Activated T-helper 1 cell treated with anti-CD3 and anti-CD28 coated beads, Interleukin-12 subunit alpha, Interleukin-12 subunit beta, Interleukin-2, Interleukin-4 antibody, amounts not matched to agents 30 ng/mL and 10 ng/mL and 1 ng/mL, durations not matched to agents 14 hours and 24 hours and 36 hours (primary cell): ENCODE measurements at regions of chr6 and their contacts with region 1.

Region 1: DNA sequence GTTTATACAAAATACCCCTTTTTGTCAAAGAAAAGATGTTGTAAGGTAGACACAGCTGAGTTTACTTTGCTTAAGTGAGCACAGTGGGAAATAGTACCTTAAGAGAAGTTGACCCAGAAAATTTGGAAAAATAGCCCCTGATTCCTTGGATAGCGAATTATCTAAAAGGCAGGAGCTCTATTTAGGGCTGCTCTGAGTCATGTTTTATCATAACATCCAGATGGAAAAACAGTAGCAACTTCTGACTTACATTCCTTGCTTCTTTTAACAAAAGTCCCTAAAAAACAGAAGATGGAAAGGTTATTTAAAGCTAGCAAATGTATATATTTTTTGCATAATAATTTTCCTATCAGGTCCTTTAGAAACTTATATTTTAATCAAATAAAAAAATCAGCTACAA is 59.0 kb downstream of the THEMIS start:
- DNase-seq: no peak
- H3K4me3 Mint-ChIP-seq: no peak overlapping the region
- H3K27ac Mint-ChIP-seq: no peak overlapping the region
- H3K4me1 Mint-ChIP-seq: peaks cover 4% of the 10 kb centered on the region
- H3K27me3 Mint-ChIP-seq: no peaks in the 10 kb centered on the region

Region 2: GRCh38 chr6:127796713-127797112 is 45.1 kb before region 1 on chr6:
- intact Hi-C with region 1: loop called (anchors 5 kb)
- DNase-seq: no peak
- H3K4me3 Mint-ChIP-seq: no peak overlapping the region
- H3K27ac Mint-ChIP-seq: no peak overlapping the region
- H3K4me1 Mint-ChIP-seq: peaks cover 46% of the 10 kb centered on the region
- H3K27me3 Mint-ChIP-seq: no peaks in the 10 kb centered on the region

Region 3: DNA sequence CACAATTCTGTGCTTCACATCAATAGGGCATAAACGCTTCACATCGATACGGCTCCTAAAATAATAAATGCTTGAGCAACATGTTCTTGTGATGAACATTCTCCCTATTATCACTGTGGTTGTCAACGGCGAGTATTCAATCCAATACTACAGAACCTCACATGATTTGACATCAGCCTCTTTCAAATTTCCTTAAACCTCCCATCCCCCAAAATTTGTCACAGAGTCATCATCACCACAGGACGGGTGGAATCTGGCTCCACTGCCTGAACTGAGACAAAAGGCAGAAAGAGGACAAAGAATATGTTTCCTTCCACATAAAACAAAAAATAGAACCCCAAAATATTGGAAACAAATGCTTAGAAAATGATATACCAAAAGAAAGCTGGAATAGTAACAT is 51.7 kb after region 1 on chr6:
- intact Hi-C with region 1: no loop called
- DNase-seq: no peak
- H3K4me3 Mint-ChIP-seq: peak overlapping the region; percentile 83
- H3K27ac Mint-ChIP-seq: peak overlapping the region; percentile 93
- H3K4me1 Mint-ChIP-seq: peaks cover 54% of the 10 kb centered on the region
- H3K27me3 Mint-ChIP-seq: no peaks in the 10 kb centered on the region

Region 4: DNA sequence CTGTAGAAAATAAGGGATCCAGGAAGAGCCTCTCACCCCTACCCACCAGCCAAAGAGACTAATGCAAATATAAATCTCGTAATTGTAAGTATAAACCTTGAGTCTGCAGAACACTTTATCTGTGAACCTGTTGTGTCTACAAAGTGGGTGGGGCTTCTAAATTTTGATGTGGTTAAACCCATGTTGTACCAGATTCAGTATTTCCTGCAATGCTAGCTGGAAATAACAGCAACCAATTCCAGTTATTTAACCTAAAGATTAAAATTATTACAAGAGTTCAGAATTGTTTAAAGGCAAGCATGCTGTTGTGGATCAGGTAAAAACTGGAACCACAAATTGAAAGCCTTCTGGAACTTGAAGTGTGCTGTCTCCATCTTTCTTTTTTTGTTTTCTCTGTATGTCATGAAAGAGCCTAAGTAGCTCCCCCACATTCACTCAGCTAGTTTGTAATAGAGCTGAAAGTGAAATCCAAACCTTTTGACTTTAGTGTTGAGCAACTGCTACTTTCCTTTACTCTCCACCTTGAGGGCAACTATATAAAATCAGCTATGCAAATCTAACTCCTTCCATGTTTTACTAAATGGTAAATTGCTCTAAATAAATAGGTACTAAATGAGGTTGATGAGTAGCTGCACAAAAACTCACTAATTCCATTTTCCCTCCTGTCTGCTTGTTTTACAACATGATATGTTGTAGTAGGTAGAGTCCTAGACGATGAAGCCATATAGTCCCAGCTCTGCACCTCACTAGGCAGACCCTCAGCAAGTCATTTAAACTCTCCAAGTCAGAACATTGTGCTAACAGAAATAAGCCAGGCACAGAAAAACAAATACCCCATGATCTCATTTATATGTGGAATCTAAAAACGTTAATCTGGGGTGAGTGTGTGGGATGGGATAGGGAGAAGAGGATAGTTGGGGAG is 77.0 kb after region 1 on chr6:
- intact Hi-C with region 1: no loop called
- DNase-seq: no peak
- H3K4me3 Mint-ChIP-seq: peak overlapping the region; percentile 71
- H3K27ac Mint-ChIP-seq: peak overlapping the region; percentile 61
- H3K4me1 Mint-ChIP-seq: peaks cover 67% of the 10 kb centered on the region
- H3K27me3 Mint-ChIP-seq: no peaks in the 10 kb centered on the region

Region 5: GRCh38 chr6:128144320-128144719 is 302.5 kb after region 1 on chr6:
- intact Hi-C with region 1: no loop called
- DNase-seq: no peak
- H3K4me3 Mint-ChIP-seq: no peak overlapping the region
- H3K27ac Mint-ChIP-seq: no peak overlapping the region
- H3K4me1 Mint-ChIP-seq: no peaks in the 10 kb centered on the region
- H3K27me3 Mint-ChIP-seq: no peaks in the 10 kb centered on the region